Sigmoid colon (tissue), 7 donors: ENCODE measurements at regions of chr14 and their contacts with region 1.

Region 1: GRCh38 chr14:77849711-77850110 is 49.8 kb downstream of the ADCK1 start:
- DNase-seq: no peak
- H3K4me3 ChIP-seq: no peak overlapping the region
- H3K27ac ChIP-seq: no peak overlapping the region
- H3K4me1 ChIP-seq: no peaks in the 10 kb centered on the region
- H3K27me3 ChIP-seq: no peaks in the 10 kb centered on the region
- CTCF ChIP-seq: no peak
- EP300 ChIP-seq: no peak
- POLR2A ChIP-seq: no peak

Region 2: GRCh38 chr14:78690836-78691235 is 841.1 kb after region 1 on chr14:
- intact Hi-C with region 1: loop called (anchors 5 kb)
- DNase-seq: no peak
- H3K4me3 ChIP-seq: no peak overlapping the region
- H3K27ac ChIP-seq: no peak overlapping the region
- H3K4me1 ChIP-seq: no peaks in the 10 kb centered on the region
- H3K27me3 ChIP-seq: no peaks in the 10 kb centered on the region
- CTCF ChIP-seq: no peak
- EP300 ChIP-seq: no peak
- POLR2A ChIP-seq: no peak